ENCODE measurements at regions of chr16 and their contacts with region 1.

Region 1: GRCh38 chr16:82693751-82694150 is 67.0 kb downstream of the CDH13 start:
- DNase-seq: no peak
- ATAC-seq: no peak
- H3K4me3 ChIP-seq: no peak overlapping the region
- H3K27ac ChIP-seq: no peak overlapping the region
- H3K4me1 ChIP-seq: peaks cover 6% of the 10 kb centered on the region
- H3K27me3 ChIP-seq: no peaks in the 10 kb centered on the region
- CTCF ChIP-seq: no peak
- POLR2A ChIP-seq: no peak
- RAD21 ChIP-seq: no peak

Region 2: DNA sequence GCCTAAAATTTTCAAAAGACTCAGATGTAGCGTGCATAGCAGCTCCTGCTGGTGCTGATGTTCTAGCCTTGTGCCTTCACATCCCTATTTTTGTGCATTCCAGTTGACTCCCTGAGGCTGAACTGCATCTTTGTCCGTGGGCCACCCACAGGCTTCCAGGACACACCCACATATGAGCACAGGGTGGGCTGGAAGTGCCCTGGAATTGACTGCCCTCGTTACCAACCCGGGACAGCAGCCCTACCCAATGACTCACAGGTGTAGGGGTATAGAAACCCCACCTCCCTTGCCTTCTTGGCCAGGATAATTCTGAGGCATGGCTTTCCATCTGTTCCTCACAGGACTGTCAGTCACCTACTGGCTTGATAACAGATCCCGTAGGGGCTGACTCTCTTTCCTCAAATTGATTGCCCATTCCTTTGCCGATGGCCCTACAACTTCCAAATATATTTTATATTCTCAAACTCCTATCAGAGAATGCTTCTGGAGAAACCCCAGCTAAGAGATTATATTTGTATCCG is 132.9 kb before region 1 on chr16:
- CTCF ChIA-PET with region 1: no interaction called
- POLR2A ChIA-PET with region 1: no interaction called
- dilution Hi-C with region 1: no loop called
- in situ Hi-C with region 1: no loop called
- intact Hi-C with region 1: no loop called
- DNase-seq: no peak
- ATAC-seq: no peak
- H3K4me3 ChIP-seq: no peak overlapping the region
- H3K27ac ChIP-seq: no peak overlapping the region
- H3K4me1 ChIP-seq: no peaks in the 10 kb centered on the region
- H3K27me3 ChIP-seq: no peaks in the 10 kb centered on the region
- CTCF ChIP-seq: no peak
- POLR2A ChIP-seq: no peak
- RAD21 ChIP-seq: no peak

Region 3: DNA sequence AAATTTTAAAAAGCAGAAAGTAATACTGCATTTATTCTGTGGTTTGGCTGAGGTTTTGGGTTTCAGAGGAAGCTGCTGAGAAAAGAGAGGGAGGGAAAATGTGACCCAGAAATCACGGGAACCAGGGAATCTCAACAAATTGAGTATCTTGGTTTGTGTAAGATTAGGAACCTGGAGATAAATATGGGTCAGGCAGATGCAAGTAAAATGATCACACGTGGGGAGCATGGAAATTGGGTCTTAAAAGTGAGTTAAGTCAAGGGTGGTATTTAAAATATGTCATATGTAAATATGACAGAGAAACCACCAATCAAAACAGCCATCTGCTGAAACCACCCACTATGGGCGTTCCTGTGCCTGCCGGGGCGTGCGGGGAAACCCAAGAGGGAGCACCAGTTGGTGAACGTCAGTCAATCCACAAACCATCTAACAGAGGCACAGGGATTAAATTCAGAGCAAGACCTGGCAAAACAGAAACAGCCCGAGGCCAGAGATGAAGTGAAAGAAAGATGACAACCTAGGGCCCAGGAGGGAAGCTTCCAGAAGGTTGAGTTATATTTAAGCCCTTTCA is 33.6 kb before region 1 on chr16:
- CTCF ChIA-PET with region 1: no interaction called
- POLR2A ChIA-PET with region 1: no interaction called
- dilution Hi-C with region 1: no loop called
- in situ Hi-C with region 1: no loop called
- intact Hi-C with region 1: loop called (anchors 2 kb)
- DNase-seq: peak; percentile 63
- ATAC-seq: peak; percentile 21; the same call in 1 of the 2 replicates
- H3K4me3 ChIP-seq: no peak overlapping the region
- H3K27ac ChIP-seq: no peak overlapping the region
- H3K4me1 ChIP-seq: peaks cover 9% of the 10 kb centered on the region
- H3K27me3 ChIP-seq: no peaks in the 10 kb centered on the region
- CTCF ChIP-seq: no peak
- POLR2A ChIP-seq: no peak
- RAD21 ChIP-seq: no peak

Measured in IMR-90 (cell line).